ENCODE measurements at regions of chr4 and their contacts with region 1.

Region 1: DNA sequence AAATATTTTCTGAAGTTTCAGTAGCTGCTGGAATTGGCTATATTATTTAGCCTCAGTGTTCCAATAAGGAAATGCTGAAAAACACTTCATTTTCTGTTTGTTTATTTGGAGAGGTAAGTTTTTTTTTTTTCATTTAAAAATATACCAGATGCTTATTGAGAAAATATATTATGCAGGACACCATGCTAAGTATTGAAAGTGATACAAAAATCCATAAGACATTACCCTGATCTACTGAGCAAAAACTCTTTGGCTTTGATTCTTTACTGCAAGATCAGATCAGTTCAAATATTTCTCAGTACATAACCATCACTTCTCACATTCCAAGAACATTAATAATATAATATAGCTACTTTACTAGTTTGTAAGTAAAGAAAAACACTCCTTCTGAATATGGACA is 123.4 kb upstream of the PACRGL start:
- DNase-seq: no peak
- H3K4me3 ChIP-seq: no peak overlapping the region
- CTCF ChIP-seq: no peak

Region 2: GRCh38 chr4:20331642-20332041 is 245.2 kb before region 1 on chr4:
- in situ Hi-C with region 1: no loop called
- DNase-seq: no peak
- H3K4me3 ChIP-seq: no peak overlapping the region
- CTCF ChIP-seq: no peak

Region 3: GRCh38 chr4:20487852-20488251 is 89.0 kb before region 1 on chr4:
- in situ Hi-C with region 1: no loop called
- DNase-seq: no peak
- H3K4me3 ChIP-seq: no peak overlapping the region
- CTCF ChIP-seq: no peak

Region 4: GRCh38 chr4:20612313-20612712 is 35.5 kb after region 1 on chr4:
- in situ Hi-C with region 1: loop called (anchors 5 kb)
- DNase-seq: peak; percentile 64
- H3K4me3 ChIP-seq: no peak overlapping the region
- CTCF ChIP-seq: no peak

Region 5: GRCh38 chr4:20639346-20639745 is 62.5 kb after region 1 on chr4:
- in situ Hi-C with region 1: no loop called
- DNase-seq: no peak
- H3K4me3 ChIP-seq: no peak overlapping the region
- CTCF ChIP-seq: no peak

Measured in astrocyte of the cerebellum (primary cell).